Heart right ventricle (tissue), 16 donors: ENCODE measurements at regions of chr16 and their contacts with region 1.

Region 1: DNA sequence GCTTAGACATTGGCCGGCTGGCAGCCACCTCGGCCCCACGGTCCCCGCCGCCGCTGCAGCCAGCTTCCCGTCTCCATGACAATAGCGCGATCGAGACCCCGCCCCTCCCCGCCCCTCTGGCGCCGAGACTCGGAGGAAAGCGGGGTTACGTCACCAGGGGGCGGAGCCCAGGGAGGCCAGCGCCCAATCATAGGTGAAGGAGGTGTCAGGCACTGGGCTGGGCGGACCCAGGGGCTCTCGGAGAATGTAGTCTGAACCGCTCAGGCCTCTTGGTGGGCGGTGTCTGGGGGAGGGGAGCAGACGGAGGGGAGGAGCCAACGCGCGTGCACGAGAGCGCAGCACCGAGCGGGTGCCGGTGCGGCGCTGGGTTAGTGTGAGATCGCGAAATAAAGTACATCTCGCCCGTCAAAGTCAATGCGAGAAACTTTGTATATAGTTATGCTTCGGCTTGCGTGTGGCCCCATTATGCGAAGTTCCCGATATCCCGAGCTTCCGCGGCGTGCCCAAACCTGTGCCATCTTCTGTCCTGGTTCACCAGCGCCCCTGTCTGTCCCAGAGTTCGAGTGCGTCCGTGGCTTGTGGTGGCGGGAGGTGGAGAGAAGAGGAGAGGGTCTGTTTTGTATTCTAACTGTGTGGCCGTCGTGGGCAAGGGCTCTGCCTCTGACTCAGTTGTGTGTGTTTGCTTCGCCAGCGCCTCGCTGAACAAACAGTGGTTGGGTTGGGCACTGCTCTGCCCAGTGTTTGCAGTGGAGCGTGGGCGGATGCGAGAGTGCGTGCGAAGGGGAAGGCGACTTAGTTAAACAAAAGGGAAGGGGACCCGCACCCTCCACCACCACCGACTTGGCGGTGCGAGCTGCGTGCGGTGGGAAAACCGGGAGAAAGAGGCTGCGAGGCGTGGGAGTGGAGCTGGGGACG is 1.3 kb upstream of the IRX5 start:
- DNase-seq: peak; percentile 100
- ATAC-seq: peak; percentile 92 to 96 (median 95)
- H3K4me3 ChIP-seq: peak overlapping the region; percentile 58 to 90 (median 74)
- H3K27ac ChIP-seq: peak overlapping the region; percentile 74 to 96 (median 88)
- H3K4me1 ChIP-seq: peaks cover 0 to 39% (median 25%) of the 10 kb centered on the region in 9 donors
- H3K27me3 ChIP-seq: peaks cover 0 to 93% (median 36%) of the 10 kb centered on the region in 7 donors
- CTCF ChIP-seq: peak in 5 of 9 donors; percentile 10 to 48 (median 41)

Region 2: GRCh38 chr16:53773150-53773846 is 1156.0 kb before region 1 on chr16:
- intact Hi-C with region 1: loop called in 3 of 10 experiments (anchors 10 kb)
- DNase-seq: peak in 1 of 2 donors; percentile 50
- ATAC-seq: peak; percentile 76 to 94 (median 90)
- H3K4me3 ChIP-seq: no peak overlapping the region
- H3K27ac ChIP-seq: peak overlapping the region in 9 of 10 donors; percentile 9 to 68 (median 51)
- H3K4me1 ChIP-seq: peaks cover 2 to 94% (median 52%) of the 10 kb centered on the region in 9 donors
- H3K27me3 ChIP-seq: no peaks in the 10 kb centered on the region
- CTCF ChIP-seq: peak; percentile 23 to 75 (median 58)

Region 3: GRCh38 chr16:53945996-53946395 is 983.4 kb before region 1 on chr16:
- intact Hi-C with region 1: loop called in 1 of 10 experiments (anchors 10 kb)
- DNase-seq: no peak
- ATAC-seq: peak in 6 of 8 donors; percentile 60 to 79 (median 68)
- H3K4me3 ChIP-seq: no peak overlapping the region
- H3K27ac ChIP-seq: no peak overlapping the region
- H3K4me1 ChIP-seq: peaks cover 0 to 16% (median 0%) of the 10 kb centered on the region in 9 donors
- H3K27me3 ChIP-seq: no peaks in the 10 kb centered on the region
- CTCF ChIP-seq: peak; percentile 49 to 80 (median 73)

Region 4: GRCh38 chr16:54407596-54407995 is 521.8 kb before region 1 on chr16:
- intact Hi-C with region 1: loop called in 1 of 10 experiments (anchors 10 kb)
- DNase-seq: no peak
- ATAC-seq: peak in 1 of 8 donors; percentile 58
- H3K4me3 ChIP-seq: no peak overlapping the region
- H3K27ac ChIP-seq: no peak overlapping the region
- H3K4me1 ChIP-seq: peaks cover 0 to 36% (median 8%) of the 10 kb centered on the region in 9 donors
- H3K27me3 ChIP-seq: no peaks in the 10 kb centered on the region
- CTCF ChIP-seq: no peak

Region 5: GRCh38 chr16:54503011-54503855 is 426.1 kb before region 1 on chr16:
- intact Hi-C with region 1: loop called in 5 of 10 experiments (anchors 5 to 10 kb)
- DNase-seq: peak; percentile 71 to 75
- ATAC-seq: peak; percentile 72 to 97 (median 88)
- H3K4me3 ChIP-seq: no peak overlapping the region
- H3K27ac ChIP-seq: peak overlapping the region; percentile 3 to 81 (median 63)
- H3K4me1 ChIP-seq: peaks cover 8 to 67% (median 47%) of the 10 kb centered on the region in 9 donors
- H3K27me3 ChIP-seq: no peaks in the 10 kb centered on the region
- CTCF ChIP-seq: no peak

Region 6: DNA sequence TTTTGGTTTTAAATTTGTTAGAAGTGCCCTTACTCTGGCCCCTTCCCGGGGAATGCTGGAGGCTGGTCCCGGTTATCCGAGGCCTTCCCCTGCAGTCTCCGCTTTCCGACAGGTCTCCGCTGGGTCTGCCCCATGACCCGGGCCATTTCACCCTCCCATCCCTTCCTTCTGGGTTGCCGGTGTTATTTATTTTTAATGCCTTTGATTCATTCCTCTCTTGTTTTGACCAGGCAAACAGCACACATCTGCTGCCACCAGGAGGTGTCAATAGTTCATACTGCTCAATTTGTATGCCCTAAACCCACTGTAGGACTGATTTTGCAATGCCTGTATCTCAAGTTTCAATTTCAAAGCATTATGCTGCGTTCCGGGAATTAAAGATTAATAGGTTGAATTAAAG is 111.9 kb before region 1 on chr16:
- intact Hi-C with region 1: loop called in 2 of 10 experiments (anchors 5 kb)
- DNase-seq: peak in 1 of 2 donors; percentile 7
- ATAC-seq: peak; percentile 41 to 72 (median 54)
- H3K4me3 ChIP-seq: no peak overlapping the region
- H3K27ac ChIP-seq: no peak overlapping the region
- H3K4me1 ChIP-seq: no peaks in the 10 kb centered on the region
- H3K27me3 ChIP-seq: no peaks in the 10 kb centered on the region
- CTCF ChIP-seq: peak in 7 of 9 donors; percentile 22 to 57 (median 44)

Region 7: GRCh38 chr16:54939510-54940279 is 10.3 kb after region 1 on chr16:
- intact Hi-C with region 1: no loop called
- DNase-seq: peak in 1 of 2 donors; percentile 1
- ATAC-seq: no peak
- H3K4me3 ChIP-seq: no peak overlapping the region
- H3K27ac ChIP-seq: no peak overlapping the region
- H3K4me1 ChIP-seq: peaks cover 3 to 39% (median 30%) of the 10 kb centered on the region in 9 donors
- H3K27me3 ChIP-seq: peaks cover 0 to 98% (median 68%) of the 10 kb centered on the region in 7 donors
- CTCF ChIP-seq: no peak

Region 8: GRCh38 chr16:55102531-55102930 is 173.2 kb after region 1 on chr16:
- intact Hi-C with region 1: no loop called
- DNase-seq: no peak
- ATAC-seq: no peak
- H3K4me3 ChIP-seq: no peak overlapping the region
- H3K27ac ChIP-seq: no peak overlapping the region
- H3K4me1 ChIP-seq: peaks cover 0 to 4% (median 0%) of the 10 kb centered on the region in 9 donors
- H3K27me3 ChIP-seq: peaks cover 0 to 13% (median 0%) of the 10 kb centered on the region in 7 donors
- CTCF ChIP-seq: no peak

Region 9: GRCh38 chr16:55370762-55371482 is 441.6 kb after region 1 on chr16:
- intact Hi-C with region 1: loop called in 6 of 10 experiments (anchors 5 to 10 kb)
- DNase-seq: peak; percentile 73 to 74
- ATAC-seq: peak; percentile 76 to 90 (median 82)
- H3K4me3 ChIP-seq: peak overlapping the region in 2 of 10 donors; percentile 17 to 23
- H3K27ac ChIP-seq: peak overlapping the region in 8 of 10 donors; percentile 16 to 89 (median 84)
- H3K4me1 ChIP-seq: peaks cover 0 to 70% (median 27%) of the 10 kb centered on the region in 9 donors
- H3K27me3 ChIP-seq: peaks cover 0 to 57% (median 0%) of the 10 kb centered on the region in 7 donors
- CTCF ChIP-seq: peak in 8 of 9 donors; percentile 47 to 78 (median 56)